ENCODE measurements at regions of chr10 and their contacts with region 1.

Region 1: GRCh38 chr10:27319752-27320561 is 79.4 kb upstream of the ACBD5 start:
- DNase-seq: peak; percentile 97
- H3K4me3 Mint-ChIP-seq: peak overlapping the region; percentile 66
- H3K27ac Mint-ChIP-seq: no peak overlapping the region
- H3K4me1 Mint-ChIP-seq: peaks cover 12% of the 10 kb centered on the region
- H3K27me3 Mint-ChIP-seq: no peaks in the 10 kb centered on the region
- CTCF ChIP-seq: no peak

Region 2: DNA sequence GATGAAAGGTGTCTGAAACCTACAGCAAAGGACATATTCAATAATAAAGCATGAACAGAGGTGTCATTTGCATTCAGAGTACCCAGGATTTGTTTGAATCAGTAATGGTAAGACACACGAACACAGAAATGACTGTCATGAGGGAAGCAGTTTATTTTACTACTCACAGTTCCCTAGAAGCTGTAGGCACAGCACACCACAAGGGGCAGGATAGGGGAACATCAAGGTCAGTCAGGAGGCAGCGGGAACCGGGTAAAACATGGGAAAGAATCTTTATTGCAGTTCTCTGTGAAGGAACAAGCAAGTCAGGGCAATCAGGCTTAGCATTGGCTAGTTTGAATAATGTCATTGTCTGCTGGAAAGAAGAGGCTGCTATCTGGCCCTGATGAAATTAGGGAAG is 692.6 kb before region 1 on chr10:
- CTCF ChIA-PET with region 1: no interaction called
- POLR2A ChIA-PET with region 1: no interaction called
- intact Hi-C with region 1: loop called (anchors 5 kb)
- DNase-seq: peak; percentile 11
- H3K4me3 Mint-ChIP-seq: no peak overlapping the region
- H3K27ac Mint-ChIP-seq: no peak overlapping the region
- H3K4me1 Mint-ChIP-seq: no peaks in the 10 kb centered on the region
- H3K27me3 Mint-ChIP-seq: peaks cover 46% of the 10 kb centered on the region
- CTCF ChIP-seq: no peak

Region 3: GRCh38 chr10:27241652-27242472 is 78.1 kb before region 1 on chr10:
- CTCF ChIA-PET with region 1: no interaction called
- POLR2A ChIA-PET with region 1: interaction called, 3 read pairs
- intact Hi-C with region 1: loop called (anchors 5 kb)
- DNase-seq: peak; percentile 95
- H3K4me3 Mint-ChIP-seq: peak overlapping the region; percentile 86
- H3K27ac Mint-ChIP-seq: peak overlapping the region; percentile 94
- H3K4me1 Mint-ChIP-seq: peaks cover 7% of the 10 kb centered on the region
- H3K27me3 Mint-ChIP-seq: no peaks in the 10 kb centered on the region
- CTCF ChIP-seq: no peak